B cell (primary cell): ENCODE measurements at regions of chr4 and their contacts with region 1.

Region 1: GRCh38 chr4:163554870-163555465 is 60.5 kb downstream of the TMA16 start:
- DNase-seq: peak; percentile 62
- ATAC-seq: no peak
- H3K4me3 ChIP-seq: no peak overlapping the region
- H3K4me3 Mint-ChIP-seq: no peak overlapping the region
- H3K27ac ChIP-seq: peak overlapping the region in 1 of 2 donors; percentile 91
- H3K27ac Mint-ChIP-seq: peak overlapping the region; percentile 82
- H3K4me1 ChIP-seq: peaks cover 58 to 77% of the 10 kb centered on the region in 2 donors
- H3K4me1 Mint-ChIP-seq: peaks cover 84% of the 10 kb centered on the region
- H3K27me3 ChIP-seq: no peaks in the 10 kb centered on the region
- H3K27me3 Mint-ChIP-seq: no peaks in the 10 kb centered on the region
- CTCF ChIP-seq: peak; percentile 93

Region 2: GRCh38 chr4:163535657-163536056 is 19.3 kb before region 1 on chr4:
- CTCF ChIA-PET with region 1: interaction called, 59 read pairs
- POLR2A ChIA-PET with region 1: no interaction called
- intact Hi-C with region 1: no loop called
- DNase-seq: no peak
- ATAC-seq: peak; percentile 49
- H3K4me3 ChIP-seq: no peak overlapping the region
- H3K4me3 Mint-ChIP-seq: no peak overlapping the region
- H3K27ac ChIP-seq: peak overlapping the region in 1 of 2 donors; percentile 42
- H3K27ac Mint-ChIP-seq: peak overlapping the region; percentile 74
- H3K4me1 ChIP-seq: no peaks in the 10 kb centered on the region
- H3K4me1 Mint-ChIP-seq: peaks cover 27% of the 10 kb centered on the region
- H3K27me3 ChIP-seq: no peaks in the 10 kb centered on the region
- H3K27me3 Mint-ChIP-seq: no peaks in the 10 kb centered on the region
- CTCF ChIP-seq: no peak

Region 3: DNA sequence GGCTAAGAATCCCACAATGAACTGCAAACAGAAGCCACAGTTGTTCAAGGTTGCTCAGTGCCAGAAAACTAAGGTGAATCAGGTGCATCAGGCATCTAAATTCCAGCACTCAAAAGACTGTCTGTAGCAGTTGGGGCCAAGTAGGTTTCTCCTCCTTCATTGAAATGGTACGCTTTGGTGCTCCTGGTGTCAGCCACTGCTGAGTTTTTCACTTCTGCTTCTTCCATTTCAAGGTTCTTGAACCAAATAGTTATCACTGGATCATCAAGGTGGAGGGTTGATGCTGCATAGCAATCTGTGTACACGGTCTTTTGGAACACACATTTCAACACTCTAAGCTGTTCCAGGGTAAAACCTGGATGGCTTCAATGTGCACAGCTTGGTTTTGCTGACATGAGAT is 13.9 kb after region 1 on chr4:
- CTCF ChIA-PET with region 1: interaction called, 28 read pairs
- POLR2A ChIA-PET with region 1: no interaction called
- intact Hi-C with region 1: no loop called
- DNase-seq: peak; percentile 59
- ATAC-seq: peak; percentile 90
- H3K4me3 ChIP-seq: peak overlapping the region in 1 of 5 experiments; percentile 21
- H3K4me3 Mint-ChIP-seq: peak overlapping the region; percentile 54
- H3K27ac ChIP-seq: peak overlapping the region; percentile 50 to 76
- H3K27ac Mint-ChIP-seq: peak overlapping the region; percentile 88
- H3K4me1 ChIP-seq: peaks cover 49 to 63% of the 10 kb centered on the region in 2 donors
- H3K4me1 Mint-ChIP-seq: peaks cover 81% of the 10 kb centered on the region
- H3K27me3 ChIP-seq: no peaks in the 10 kb centered on the region
- H3K27me3 Mint-ChIP-seq: no peaks in the 10 kb centered on the region
- CTCF ChIP-seq: no peak

Region 4: DNA sequence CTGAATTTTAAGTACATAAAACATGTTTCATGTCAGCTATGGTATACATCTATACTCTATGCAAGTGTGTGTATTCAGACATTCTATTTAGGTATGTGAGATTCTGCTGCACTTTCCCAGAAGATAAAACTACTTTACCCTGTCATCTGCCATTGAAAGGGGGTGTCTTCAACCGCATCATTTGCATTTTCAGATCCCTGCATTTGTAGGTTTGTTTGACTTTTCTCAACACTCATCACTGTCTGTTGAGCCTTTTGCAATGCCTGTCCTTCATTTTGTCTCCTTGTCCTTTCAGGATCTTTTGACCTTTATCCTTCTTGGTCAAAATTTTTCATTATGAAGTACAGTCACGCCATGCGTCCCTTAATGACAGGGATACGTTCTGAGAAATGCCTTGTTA is 43.1 kb after region 1 on chr4:
- CTCF ChIA-PET with region 1: interaction called, 48 read pairs
- POLR2A ChIA-PET with region 1: no interaction called
- intact Hi-C with region 1: no loop called
- DNase-seq: peak; percentile 32
- ATAC-seq: peak; percentile 62
- H3K4me3 ChIP-seq: peak overlapping the region in 2 of 5 experiments; percentile 4 to 41
- H3K4me3 Mint-ChIP-seq: peak overlapping the region; percentile 62
- H3K27ac ChIP-seq: peak overlapping the region in 1 of 2 donors; percentile 77
- H3K27ac Mint-ChIP-seq: peak overlapping the region; percentile 85
- H3K4me1 ChIP-seq: peaks cover 55 to 78% of the 10 kb centered on the region in 2 donors
- H3K4me1 Mint-ChIP-seq: peaks cover 66% of the 10 kb centered on the region
- H3K27me3 ChIP-seq: no peaks in the 10 kb centered on the region
- H3K27me3 Mint-ChIP-seq: no peaks in the 10 kb centered on the region
- CTCF ChIP-seq: no peak

Region 5: GRCh38 chr4:163663454-163664225 is 108.7 kb after region 1 on chr4:
- CTCF ChIA-PET with region 1: interaction called, 1,334 read pairs
- POLR2A ChIA-PET with region 1: interaction called, 6 read pairs
- intact Hi-C with region 1: loop called (anchors 1 kb)
- DNase-seq: peak; percentile 84
- ATAC-seq: peak; percentile 71
- H3K4me3 ChIP-seq: peak overlapping the region in 3 of 5 experiments; percentile 6 to 48 (median 32)
- H3K4me3 Mint-ChIP-seq: peak overlapping the region; percentile 84
- H3K27ac ChIP-seq: peak overlapping the region; percentile 93 to 94
- H3K27ac Mint-ChIP-seq: peak overlapping the region; percentile 98
- H3K4me1 ChIP-seq: peaks cover 69 to 72% of the 10 kb centered on the region in 2 donors
- H3K4me1 Mint-ChIP-seq: peaks cover 75% of the 10 kb centered on the region
- H3K27me3 ChIP-seq: no peaks in the 10 kb centered on the region
- H3K27me3 Mint-ChIP-seq: no peaks in the 10 kb centered on the region
- CTCF ChIP-seq: no peak

Region 6: GRCh38 chr4:163744861-163745260 is 189.9 kb after region 1 on chr4:
- CTCF ChIA-PET with region 1: interaction called, 12 read pairs
- POLR2A ChIA-PET with region 1: no interaction called
- intact Hi-C with region 1: no loop called
- DNase-seq: peak; percentile 6
- ATAC-seq: no peak
- H3K4me3 ChIP-seq: no peak overlapping the region
- H3K4me3 Mint-ChIP-seq: no peak overlapping the region
- H3K27ac ChIP-seq: no peak overlapping the region
- H3K27ac Mint-ChIP-seq: no peak overlapping the region
- H3K4me1 ChIP-seq: peaks cover 0 to 8% of the 10 kb centered on the region in 2 donors
- H3K4me1 Mint-ChIP-seq: peaks cover 5% of the 10 kb centered on the region
- H3K27me3 ChIP-seq: no peaks in the 10 kb centered on the region
- H3K27me3 Mint-ChIP-seq: peaks cover 5% of the 10 kb centered on the region
- CTCF ChIP-seq: no peak

Region 7: GRCh38 chr4:164731827-164732474 is 1177.0 kb after region 1 on chr4:
- CTCF ChIA-PET with region 1: interaction called, 14 read pairs
- POLR2A ChIA-PET with region 1: no interaction called
- intact Hi-C with region 1: no loop called
- DNase-seq: peak; percentile 47
- ATAC-seq: peak; percentile 41
- H3K4me3 ChIP-seq: no peak overlapping the region
- H3K4me3 Mint-ChIP-seq: no peak overlapping the region
- H3K27ac ChIP-seq: no peak overlapping the region
- H3K27ac Mint-ChIP-seq: no peak overlapping the region
- H3K4me1 ChIP-seq: no peaks in the 10 kb centered on the region
- H3K4me1 Mint-ChIP-seq: peaks cover 3% of the 10 kb centered on the region
- H3K27me3 ChIP-seq: no peaks in the 10 kb centered on the region
- H3K27me3 Mint-ChIP-seq: no peaks in the 10 kb centered on the region
- CTCF ChIP-seq: peak; percentile 97